ENCODE measurements at regions of chr3 and their contacts with region 1.

Region 1: GRCh38 chr3:149717391-149718056 is 34.8 kb downstream of the COMMD2 start:
- DNase-seq: peak in 1 of 2 donors; percentile 32
- ATAC-seq: peak; percentile 60 to 70
- H3K4me3 ChIP-seq: peak overlapping the region in 1 of 4 donors; percentile 24
- H3K27ac ChIP-seq: no peak overlapping the region
- H3K4me1 ChIP-seq: no peaks in the 10 kb centered on the region
- H3K27me3 ChIP-seq: no peaks in the 10 kb centered on the region
- CTCF ChIP-seq: peak; percentile 60 to 79 (median 72)
- POLR2A ChIP-seq: no peak

Region 2: DNA sequence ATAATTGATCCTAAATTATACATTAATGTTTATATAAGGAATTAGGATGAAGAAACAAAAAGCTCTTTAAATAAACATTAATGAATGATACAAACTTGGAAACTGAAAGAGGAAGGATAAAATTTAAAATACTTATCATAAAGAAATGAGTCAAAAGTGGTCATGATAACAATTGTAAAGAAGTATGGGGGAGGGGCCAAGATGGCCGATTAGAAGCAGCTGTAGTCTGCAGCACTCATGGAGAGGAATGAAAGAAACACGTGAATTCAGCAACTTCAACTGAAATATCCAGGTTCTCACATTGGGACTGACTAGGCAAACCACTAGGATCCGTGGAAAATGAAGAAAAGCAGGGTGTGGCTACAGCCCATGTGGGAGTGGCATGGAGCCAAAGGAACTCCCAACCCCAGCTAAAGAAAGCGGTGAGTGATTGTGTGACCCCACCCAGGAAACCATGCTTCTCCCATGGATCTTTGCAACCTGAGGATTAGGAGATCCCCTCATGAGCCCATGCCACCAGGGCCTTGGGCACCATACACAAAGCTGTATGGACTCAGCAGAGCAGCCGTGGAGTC is 482.8 kb before region 1 on chr3:
- in situ Hi-C with region 1: no loop called
- intact Hi-C with region 1: no loop called
- DNase-seq: no peak
- ATAC-seq: no peak
- H3K4me3 ChIP-seq: no peak overlapping the region
- H3K27ac ChIP-seq: no peak overlapping the region
- H3K4me1 ChIP-seq: no peaks in the 10 kb centered on the region
- H3K27me3 ChIP-seq: no peaks in the 10 kb centered on the region
- CTCF ChIP-seq: no peak
- POLR2A ChIP-seq: no peak

Region 3: DNA sequence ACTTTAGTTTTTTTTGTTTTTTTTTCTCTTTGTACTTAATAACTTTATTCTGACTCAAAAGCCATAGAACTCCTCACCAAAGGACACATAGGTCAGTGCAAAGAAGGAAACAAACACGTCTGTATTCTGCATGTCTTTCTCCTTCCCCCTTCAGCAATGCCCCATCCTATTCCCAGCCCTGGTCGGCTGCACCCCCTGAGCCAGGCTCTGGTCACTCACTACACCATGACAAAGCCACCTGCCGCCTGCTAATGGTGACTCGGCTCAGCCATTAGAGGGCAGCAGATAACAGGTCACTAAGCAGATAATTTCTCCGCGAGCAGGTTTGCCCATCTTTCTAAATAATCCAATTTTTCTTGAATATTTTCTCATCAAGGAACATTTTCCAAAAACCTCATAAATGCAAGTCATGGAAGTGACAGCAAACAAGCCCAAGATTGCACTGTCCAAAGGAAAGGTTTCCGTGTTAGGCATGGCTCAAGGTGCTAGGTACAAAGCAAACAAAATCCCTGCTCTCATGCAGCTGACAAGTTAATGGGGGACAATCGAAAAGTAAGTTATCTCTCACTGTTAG is 205.2 kb before region 1 on chr3:
- in situ Hi-C with region 1: loop called (anchors 5 to 25 kb)
- intact Hi-C with region 1: loop called (anchors 1 kb)
- DNase-seq: peak; percentile 32 to 43
- ATAC-seq: peak; percentile 48 to 58
- H3K4me3 ChIP-seq: no peak overlapping the region
- H3K27ac ChIP-seq: no peak overlapping the region
- H3K4me1 ChIP-seq: peaks cover 5 to 8% of the 10 kb centered on the region in 2 donors
- H3K27me3 ChIP-seq: no peaks in the 10 kb centered on the region
- CTCF ChIP-seq: peak; percentile 64 to 90 (median 74)
- POLR2A ChIP-seq: no peak

Region 4: GRCh38 chr3:149519912-149520311 is 197.6 kb before region 1 on chr3:
- in situ Hi-C with region 1: loop called in 2 of 4 experiments (anchors 5 to 25 kb)
- intact Hi-C with region 1: no loop called
- DNase-seq: no peak
- ATAC-seq: no peak
- H3K4me3 ChIP-seq: no peak overlapping the region
- H3K27ac ChIP-seq: no peak overlapping the region
- H3K4me1 ChIP-seq: no peaks in the 10 kb centered on the region
- H3K27me3 ChIP-seq: no peaks in the 10 kb centered on the region
- CTCF ChIP-seq: no peak
- POLR2A ChIP-seq: no peak

Region 5: GRCh38 chr3:149534671-149535332 is 182.7 kb before region 1 on chr3:
- in situ Hi-C with region 1: no loop called
- intact Hi-C with region 1: loop called (anchors 5 kb)
- DNase-seq: no peak
- ATAC-seq: no peak
- H3K4me3 ChIP-seq: no peak overlapping the region
- H3K27ac ChIP-seq: peak overlapping the region in 1 of 4 donors; percentile 7
- H3K4me1 ChIP-seq: peaks cover 22 to 25% of the 10 kb centered on the region in 2 donors
- H3K27me3 ChIP-seq: no peaks in the 10 kb centered on the region
- CTCF ChIP-seq: no peak
- POLR2A ChIP-seq: no peak

Region 6: DNA sequence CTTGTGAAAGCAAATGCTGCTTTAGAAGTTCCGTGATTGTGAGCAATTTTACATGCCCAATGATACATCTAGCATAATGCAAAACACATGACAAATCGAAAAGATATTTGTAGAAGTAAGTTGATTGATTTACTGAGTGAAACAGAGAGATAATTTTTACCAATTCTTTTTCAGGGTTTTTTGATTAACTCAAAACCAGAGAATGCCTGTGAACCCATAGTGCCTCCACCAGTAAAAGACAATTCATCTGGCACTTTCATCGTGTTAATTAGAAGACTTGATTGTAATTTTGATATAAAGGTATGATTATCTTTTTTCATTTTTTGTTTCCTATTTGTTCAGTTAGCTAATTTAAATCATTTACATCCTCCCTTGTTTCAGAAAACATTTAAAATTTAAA is 154.3 kb after region 1 on chr3:
- in situ Hi-C with region 1: no loop called
- intact Hi-C with region 1: no loop called
- DNase-seq: no peak
- ATAC-seq: no peak
- H3K4me3 ChIP-seq: no peak overlapping the region
- H3K27ac ChIP-seq: peak overlapping the region in 1 of 4 donors; percentile 28
- H3K4me1 ChIP-seq: peaks cover 0 to 11% of the 10 kb centered on the region in 2 donors
- H3K27me3 ChIP-seq: no peaks in the 10 kb centered on the region
- CTCF ChIP-seq: no peak
- POLR2A ChIP-seq: no peak

Region 7: GRCh38 chr3:150303776-150304175 is 586.3 kb after region 1 on chr3:
- in situ Hi-C with region 1: no loop called
- intact Hi-C with region 1: no loop called
- DNase-seq: no peak
- ATAC-seq: no peak
- H3K4me3 ChIP-seq: no peak overlapping the region
- H3K27ac ChIP-seq: no peak overlapping the region
- H3K4me1 ChIP-seq: no peaks in the 10 kb centered on the region
- H3K27me3 ChIP-seq: no peaks in the 10 kb centered on the region
- CTCF ChIP-seq: peak in 1 of 5 experiments; percentile 37
- POLR2A ChIP-seq: no peak

Measured in gastrocnemius medialis (tissue), 4 donors.